ENCODE measurements at regions of chr20 and their contacts with region 1.

Region 1: DNA sequence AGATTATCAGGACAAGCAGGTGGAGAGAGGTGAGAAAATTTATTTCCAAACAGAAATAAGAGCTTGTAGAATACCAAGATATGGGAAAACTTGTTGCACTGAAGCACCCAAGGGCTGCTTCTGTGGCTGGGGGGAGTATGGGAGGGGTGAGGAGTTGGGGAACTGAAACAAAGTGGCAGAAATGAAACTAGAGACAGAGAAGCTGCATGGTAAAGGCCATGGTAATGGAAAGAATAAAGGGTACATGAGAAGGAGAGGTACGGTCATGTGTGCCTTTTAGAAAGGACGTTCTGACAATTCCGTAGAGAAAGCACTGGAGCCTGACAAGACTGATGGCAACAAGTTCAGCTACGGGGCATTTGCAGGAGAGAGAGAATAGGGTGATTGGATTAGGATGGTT is 51.6 kb upstream of the RIN2 start:
- DNase-seq: peak; percentile 27
- ATAC-seq: peak; percentile 89
- H3K4me3 ChIP-seq: no peak overlapping the region
- H3K27ac ChIP-seq: no peak overlapping the region
- H3K4me1 ChIP-seq: no peaks in the 10 kb centered on the region
- H3K27me3 ChIP-seq: peaks cover 0 to 3% of the 10 kb centered on the region in 2 experiments; a peak in 2 of 4 replicates
- CTCF ChIP-seq: no peak
- EP300 ChIP-seq: no peak
- POLR2A ChIP-seq: no peak
- RAD21 ChIP-seq: no peak

Region 2: DNA sequence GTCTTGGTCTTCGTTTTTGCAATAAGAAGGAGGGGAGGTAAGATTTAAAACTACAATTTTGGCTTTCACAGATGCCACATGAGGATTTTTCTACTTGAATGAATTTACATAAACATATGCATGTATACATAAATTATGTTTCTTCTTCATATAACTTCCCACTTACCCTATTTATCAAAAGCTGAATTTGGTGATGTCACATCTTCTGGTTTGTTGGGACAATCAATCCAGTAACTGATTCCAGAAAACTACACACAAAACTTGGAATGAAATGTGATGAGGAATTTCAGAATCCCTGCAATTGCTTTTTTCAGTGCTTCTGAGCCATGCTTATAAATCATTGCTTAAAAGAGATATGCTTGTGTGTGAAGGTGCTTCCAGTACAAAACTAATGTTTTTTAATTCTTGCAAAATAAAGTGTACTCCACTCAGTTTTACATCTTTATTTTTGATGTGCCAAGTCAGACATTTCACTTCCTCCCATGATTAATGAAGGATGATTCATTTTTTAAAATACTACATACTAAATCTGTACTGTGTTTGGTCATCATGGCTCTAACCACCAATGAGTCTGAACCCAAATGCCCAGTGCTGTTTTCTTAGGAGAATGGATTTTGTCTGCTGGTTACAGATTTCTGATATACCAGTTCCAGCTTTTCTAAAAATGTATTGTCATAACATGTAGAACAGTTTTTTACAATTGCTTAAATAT is 19.5 kb after region 1 on chr20:
- CTCF ChIA-PET with region 1: no interaction called
- POLR2A ChIA-PET with region 1: interaction called, 5 read pairs
- RAD21 ChIA-PET with region 1: no interaction called
- SMC1A ChIA-PET with region 1: interaction called, 23 read pairs
- in situ Hi-C with region 1: no loop called
- intact Hi-C with region 1: no loop called
- DNase-seq: no peak
- ATAC-seq: no peak; the same call in 2 of the 3 replicates
- H3K4me3 ChIP-seq: no peak overlapping the region
- H3K27ac ChIP-seq: no peak overlapping the region
- H3K4me1 ChIP-seq: no peaks in the 10 kb centered on the region; the same call in 1 of the 2 replicates
- H3K27me3 ChIP-seq: no peaks in the 10 kb centered on the region
- CTCF ChIP-seq: no peak
- EP300 ChIP-seq: no peak
- POLR2A ChIP-seq: no peak
- RAD21 ChIP-seq: no peak

Region 3: GRCh38 chr20:19735446-19735845 is 29.0 kb after region 1 on chr20:
- CTCF ChIA-PET with region 1: interaction called, 10 read pairs
- POLR2A ChIA-PET with region 1: interaction called, 3 read pairs
- RAD21 ChIA-PET with region 1: interaction called, 21 read pairs
- SMC1A ChIA-PET with region 1: interaction called, 30 read pairs
- in situ Hi-C with region 1: no loop called
- intact Hi-C with region 1: no loop called
- DNase-seq: peak; percentile 3
- ATAC-seq: peak; percentile 77
- H3K4me3 ChIP-seq: no peak overlapping the region
- H3K27ac ChIP-seq: no peak overlapping the region
- H3K4me1 ChIP-seq: no peaks in the 10 kb centered on the region
- H3K27me3 ChIP-seq: no peaks in the 10 kb centered on the region
- CTCF ChIP-seq: no peak
- EP300 ChIP-seq: no peak
- POLR2A ChIP-seq: no peak
- RAD21 ChIP-seq: no peak